Pancreas (tissue), 10 donors: ENCODE measurements at regions of chr11 and their contacts with region 1.

Region 1: GRCh38 chr11:34051349-34052035 is at the start of gene CAPRIN1:
- DNase-seq: peak; percentile 84 to 95 (median 88)
- ATAC-seq: peak; percentile 86 to 92 (median 90)
- H3K4me3 ChIP-seq: peak within 1 kb of the TSS; percentile 85 to 94 (median 92)
- H3K27ac ChIP-seq: peak within 1 kb of the TSS; percentile 99 to 100 (median 100)
- H3K4me1 ChIP-seq: peaks cover 18 to 31% (median 29%) of the 10 kb centered on the region in 3 donors
- H3K27me3 ChIP-seq: no peaks in the 10 kb centered on the region
- CTCF ChIP-seq: no peak
- total RNA-seq, gene CAPRIN1: 84.4 to 116 (median 101) TPM

Region 2: GRCh38 chr11:34105079-34105956 is 53.8 kb after region 1 on chr11 and contains the start of gene NAT10:
- intact Hi-C with region 1: loop called in 1 of 3 experiments (anchors 10 kb)
- DNase-seq: peak; percentile 93 to 99 (median 96)
- ATAC-seq: peak; percentile 97 to 99 (median 98)
- H3K4me3 ChIP-seq: peak within 1 kb of the TSS; percentile 61 to 94 (median 80)
- H3K27ac ChIP-seq: peak within 1 kb of the TSS; percentile 80 to 91 (median 88)
- H3K4me1 ChIP-seq: peaks cover 0 to 5% (median 5%) of the 10 kb centered on the region in 3 donors
- H3K27me3 ChIP-seq: no peaks in the 10 kb centered on the region
- CTCF ChIP-seq: no peak
- total RNA-seq, gene NAT10: 14.5 to 30.2 (median 22.9) TPM

Region 3: DNA sequence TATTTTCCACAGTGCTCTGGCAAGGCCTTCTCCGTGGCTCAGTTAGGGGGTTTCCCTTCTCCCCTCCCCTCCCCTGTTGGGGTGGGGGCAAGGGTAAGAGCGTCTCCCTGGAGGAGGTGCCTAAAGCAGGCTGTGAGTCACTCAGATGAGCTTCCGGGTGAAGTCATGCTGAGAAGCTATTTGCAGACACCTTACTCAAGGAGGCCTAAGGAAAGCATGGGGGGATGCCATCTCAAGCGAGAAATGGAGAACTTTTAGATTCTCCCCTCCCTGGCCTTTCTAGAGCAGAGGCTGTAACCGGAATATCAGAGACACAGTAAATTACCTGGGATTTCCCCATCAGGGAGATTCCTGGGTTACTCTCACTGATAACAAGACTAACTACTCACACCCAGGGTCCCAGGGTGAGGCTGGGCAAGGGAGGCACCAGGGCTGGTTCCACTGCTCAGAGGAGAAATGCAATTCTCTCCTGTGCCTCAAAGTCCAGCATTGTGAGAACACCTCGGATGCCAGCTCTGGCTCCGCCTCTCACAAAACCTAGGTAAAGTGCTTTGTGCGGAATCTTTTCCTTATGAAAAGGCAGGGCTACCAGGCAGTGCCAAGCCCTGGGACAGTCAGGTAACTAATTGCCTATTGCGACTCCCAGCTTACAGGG is 182.7 kb after region 1 on chr11:
- intact Hi-C with region 1: no loop called
- DNase-seq: peak in 3 of 6 donors; percentile 35 to 45 (median 37)
- ATAC-seq: peak; percentile 66 to 89 (median 82)
- H3K4me3 ChIP-seq: no peak overlapping the region
- H3K27ac ChIP-seq: peak overlapping the region in 3 of 4 donors; percentile 24 to 77 (median 73)
- H3K4me1 ChIP-seq: no peaks in the 10 kb centered on the region
- H3K27me3 ChIP-seq: no peaks in the 10 kb centered on the region
- CTCF ChIP-seq: no peak

Region 4: GRCh38 chr11:34357701-34358257 is 306.3 kb after region 1 on chr11 and contains the start of gene ABTB2:
- intact Hi-C with region 1: no loop called
- DNase-seq: peak; percentile 96 to 98 (median 98)
- ATAC-seq: peak; percentile 88 to 94 (median 90)
- H3K4me3 ChIP-seq: peak within 1 kb of the TSS; percentile 36 to 71 (median 46)
- H3K27ac ChIP-seq: peak within 1 kb of the TSS; percentile 56 to 84 (median 78)
- H3K4me1 ChIP-seq: peaks cover 5 to 7% (median 6%) of the 10 kb centered on the region in 3 donors
- H3K27me3 ChIP-seq: no peaks in the 10 kb centered on the region
- CTCF ChIP-seq: no peak
- total RNA-seq, gene ABTB2: 0.97 to 4.4 (median 2.2) TPM